ENCODE measurements at regions of chr7 and their contacts with region 1.

Region 1: GRCh38 chr7:90244909-90245851 is at the start of gene CFAP69:
- DNase-seq: peak; percentile 79
- H3K4me3 Mint-ChIP-seq: peak within 1 kb of the TSS; percentile 88
- H3K27ac Mint-ChIP-seq: peak within 1 kb of the TSS; percentile 60
- H3K4me1 Mint-ChIP-seq: peaks cover 21% of the 10 kb centered on the region
- H3K27me3 Mint-ChIP-seq: peaks cover 28% of the 10 kb centered on the region
- total RNA-seq, gene CFAP69: not detected in 2 replicates

Region 2: GRCh38 chr7:90155206-90155605 is 90.0 kb before region 1 on chr7:
- intact Hi-C with region 1: loop called (anchors 1 kb)
- DNase-seq: no peak
- H3K4me3 Mint-ChIP-seq: peak overlapping the region; percentile 78
- H3K27ac Mint-ChIP-seq: peak overlapping the region; percentile 12
- H3K4me1 Mint-ChIP-seq: peaks cover 5% of the 10 kb centered on the region
- H3K27me3 Mint-ChIP-seq: peaks cover 10% of the 10 kb centered on the region

Region 3: GRCh38 chr7:90178679-90179278 is 66.4 kb before region 1 on chr7:
- intact Hi-C with region 1: loop called (anchors 1 kb)
- DNase-seq: peak; percentile 14
- H3K4me3 Mint-ChIP-seq: peak overlapping the region; percentile 51
- H3K27ac Mint-ChIP-seq: peak overlapping the region; percentile 93
- H3K4me1 Mint-ChIP-seq: peaks cover 29% of the 10 kb centered on the region
- H3K27me3 Mint-ChIP-seq: no peaks in the 10 kb centered on the region

Region 4: GRCh38 chr7:90211391-90212148 is 33.6 kb before region 1 on chr7 and contains the start of gene STEAP2:
- intact Hi-C with region 1: loop called (anchors 2 kb)
- DNase-seq: peak; percentile 6
- H3K4me3 Mint-ChIP-seq: peak within 1 kb of the TSS; percentile 64
- H3K27ac Mint-ChIP-seq: no peak within 1 kb of the TSS
- H3K4me1 Mint-ChIP-seq: peaks cover 6% of the 10 kb centered on the region
- H3K27me3 Mint-ChIP-seq: peaks cover 24% of the 10 kb centered on the region
- total RNA-seq, gene STEAP2: 0.05 TPM in 1 of 2 replicates, not detected in the other

Region 5: GRCh38 chr7:90262438-90262837 is 17.3 kb after region 1 on chr7:
- intact Hi-C with region 1: loop called (anchors 2 kb)
- DNase-seq: no peak
- H3K4me3 Mint-ChIP-seq: no peak overlapping the region
- H3K27ac Mint-ChIP-seq: no peak overlapping the region
- H3K4me1 Mint-ChIP-seq: no peaks in the 10 kb centered on the region
- H3K27me3 Mint-ChIP-seq: peaks cover 11% of the 10 kb centered on the region

Region 6: GRCh38 chr7:90403174-90404113 is 158.3 kb after region 1 on chr7 and contains the start of gene CLDN12:
- intact Hi-C with region 1: loop called (anchors 2 kb)
- DNase-seq: peak; percentile 75
- H3K4me3 Mint-ChIP-seq: peak within 1 kb of the TSS; percentile 88
- H3K27ac Mint-ChIP-seq: peak within 1 kb of the TSS; percentile 86
- H3K4me1 Mint-ChIP-seq: peaks cover 28% of the 10 kb centered on the region
- H3K27me3 Mint-ChIP-seq: peaks cover 10% of the 10 kb centered on the region
- total RNA-seq, gene CLDN12: 4.4 and 6.2 TPM in 2 replicates

Measured in activated T-helper 1 cell treated with anti-CD3 and anti-CD28 coated beads, Interleukin-12 subunit alpha, Interleukin-12 subunit beta, Interleukin-2, Interleukin-4 antibody, amounts not matched to agents 30 ng/mL and 10 ng/mL and 1 ng/mL, durations not matched to agents 14 hours and 24 hours and 36 hours (primary cell).